ENCODE measurements at regions of chr2 and their contacts with region 1.

Region 1: DNA sequence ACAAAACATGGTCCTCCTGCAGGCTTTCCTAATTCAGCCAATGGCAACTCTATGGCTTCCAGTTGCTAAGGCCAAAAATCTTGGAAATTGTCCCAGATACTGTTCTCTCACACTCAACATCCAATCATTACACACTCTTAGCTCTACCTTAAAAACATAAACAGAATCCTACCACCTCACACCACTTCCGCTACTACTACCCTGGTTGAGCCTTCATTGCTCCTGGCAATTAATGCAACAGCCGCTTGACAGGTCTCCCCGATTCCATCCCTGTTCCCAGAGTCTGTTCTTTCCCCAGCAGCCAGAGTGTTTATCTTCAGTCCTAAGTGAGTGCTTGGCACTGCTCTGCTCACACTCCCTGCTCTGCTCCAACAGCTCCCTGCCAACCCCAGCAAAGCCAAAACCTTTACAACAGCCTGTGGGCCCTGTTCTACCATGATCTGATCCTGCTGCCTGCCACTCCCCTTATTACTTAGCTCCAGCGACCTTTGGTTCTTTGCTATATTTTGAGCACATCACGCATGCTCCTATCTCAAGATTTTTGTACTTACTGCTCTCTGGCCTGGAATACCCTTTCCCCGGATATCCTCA is 67.5 kb upstream of the AMMECR1L start:
- H3K4me3 Mint-ChIP-seq: no peak overlapping the region
- H3K27ac Mint-ChIP-seq: no peak overlapping the region
- H3K4me1 Mint-ChIP-seq: peaks cover 16% of the 10 kb centered on the region
- H3K27me3 Mint-ChIP-seq: no peaks in the 10 kb centered on the region

Region 2: GRCh38 chr2:127884436-127885345 is 68.5 kb before region 1 on chr2:
- intact Hi-C with region 1: loop called (anchors 10 kb)
- H3K4me3 Mint-ChIP-seq: peak overlapping the region; percentile 99
- H3K27ac Mint-ChIP-seq: peak overlapping the region; percentile 90
- H3K4me1 Mint-ChIP-seq: peaks cover 32% of the 10 kb centered on the region
- H3K27me3 Mint-ChIP-seq: no peaks in the 10 kb centered on the region

Measured in dendritic cell treated with granulocyte-macrophage colony-stimulating factor and Interleukin-4, amounts not matched to agents 40 ng/mL and 50 ng/mL, for 4 days (primary cell).